ENCODE measurements at regions of chr2 and their contacts with region 1.

Region 1: DNA sequence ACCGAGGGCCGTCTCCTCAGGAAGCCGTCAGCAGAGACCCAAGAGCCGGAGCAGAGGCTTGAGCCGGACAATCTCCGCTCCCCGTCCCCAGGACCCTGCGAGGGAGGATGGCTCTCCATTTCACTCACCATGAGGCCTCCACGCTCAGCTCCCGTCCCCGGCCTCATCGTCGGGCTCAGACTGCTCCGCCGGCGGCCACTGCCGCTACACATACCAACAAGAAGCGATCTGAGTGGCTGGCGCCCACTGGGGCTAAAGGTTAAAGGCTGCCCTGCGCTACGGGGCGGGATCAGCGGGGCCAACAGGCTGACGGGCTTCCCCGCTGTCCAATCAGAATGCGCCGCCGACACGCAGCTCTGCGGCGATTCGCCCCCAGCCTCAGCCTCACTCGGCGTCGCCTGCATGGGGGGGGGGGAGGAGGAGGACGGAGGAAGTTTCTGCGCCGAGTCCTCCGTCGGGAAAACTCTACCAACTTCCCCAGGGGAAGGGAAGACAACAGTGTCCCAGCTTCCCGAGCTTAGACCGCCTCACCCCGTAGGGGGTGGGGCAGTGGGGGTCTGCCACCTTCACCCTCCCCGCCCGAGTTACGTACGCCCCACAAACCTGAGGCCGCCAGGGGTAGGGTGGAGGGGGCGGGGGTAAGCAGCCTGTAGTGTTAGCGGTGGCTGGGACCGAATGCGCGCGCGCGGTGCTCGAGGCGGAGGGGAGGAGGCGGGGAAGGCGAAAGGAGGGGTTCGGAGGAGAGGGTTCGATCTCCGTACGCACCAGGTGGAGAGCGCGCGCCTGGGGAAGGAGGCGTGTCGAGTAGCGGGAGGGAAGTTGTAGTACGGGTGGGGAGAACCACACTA is at the start of gene PRPF40A:
- DNase-seq: peak; percentile 99
- ATAC-seq: peak; percentile 78
- H3K4me3 Mint-ChIP-seq: peak within 1 kb of the TSS; percentile 100
- H3K27ac Mint-ChIP-seq: peak within 1 kb of the TSS; percentile 100
- H3K4me1 Mint-ChIP-seq: peaks cover 62% of the 10 kb centered on the region
- H3K27me3 Mint-ChIP-seq: no peaks in the 10 kb centered on the region
- total RNA-seq, gene PRPF40A: 126 to 127 TPM

Region 2: DNA sequence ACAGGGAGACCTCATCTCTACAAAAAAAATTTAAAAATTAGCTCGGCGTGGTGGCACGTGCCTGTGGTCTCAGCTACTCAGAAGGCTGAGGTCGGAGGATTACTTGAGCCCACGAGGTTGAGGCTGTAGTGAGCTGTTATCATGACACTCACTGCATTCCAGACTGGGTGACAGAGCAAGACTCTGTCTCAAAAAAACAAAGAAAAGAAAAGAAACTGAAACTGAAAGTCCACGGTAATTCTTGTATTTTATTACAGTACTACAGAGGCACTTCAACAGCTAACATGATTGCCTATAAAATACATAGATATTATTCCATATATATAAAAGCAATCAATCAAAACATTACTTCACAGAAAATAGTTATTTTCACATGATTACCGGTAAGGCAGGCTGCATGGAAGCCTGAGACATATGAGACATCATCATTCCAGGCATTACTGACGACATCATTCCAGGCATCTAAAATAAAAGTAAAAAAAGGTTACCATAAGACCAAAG is 23.2 kb before region 1 on chr2:
- CTCF ChIA-PET with region 1: interaction called, 11 read pairs
- DNase-seq: peak; percentile 79
- ATAC-seq: peak; percentile 86
- H3K4me3 Mint-ChIP-seq: peak overlapping the region; percentile 83
- H3K27ac Mint-ChIP-seq: peak overlapping the region; percentile 98
- H3K4me1 Mint-ChIP-seq: peaks cover 33% of the 10 kb centered on the region
- H3K27me3 Mint-ChIP-seq: no peaks in the 10 kb centered on the region

Region 3: DNA sequence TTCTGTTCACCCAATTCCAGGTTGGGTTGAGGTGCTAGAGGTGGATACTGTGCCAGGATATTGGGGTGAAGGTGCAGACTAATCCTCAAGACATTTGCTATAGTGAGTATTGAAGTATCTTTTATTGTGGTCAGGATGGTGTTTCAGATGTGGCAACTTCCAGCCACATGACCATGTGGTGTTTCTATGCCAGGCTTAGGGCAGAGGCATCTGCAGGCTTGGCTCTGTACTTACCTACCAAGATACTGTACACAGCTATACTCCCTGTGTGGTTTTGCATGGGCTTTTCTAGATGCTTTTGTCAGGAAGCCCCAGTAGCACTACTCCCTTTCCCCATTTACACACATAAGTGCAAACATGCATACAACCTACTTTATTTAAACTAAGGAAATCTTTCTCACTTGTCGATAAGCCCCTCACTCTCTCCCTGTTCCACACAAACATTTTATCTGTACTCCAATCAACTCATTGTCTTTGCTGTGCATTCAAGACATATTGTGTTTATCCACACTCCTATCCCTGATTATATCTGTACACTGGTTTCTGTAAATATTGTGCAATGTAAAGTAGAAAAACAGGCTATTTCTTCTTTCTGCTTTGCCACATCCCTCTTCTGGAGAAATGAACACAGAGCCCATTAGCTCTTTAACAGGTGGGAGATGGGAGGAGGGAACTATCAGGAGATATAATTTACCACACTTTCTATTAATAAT is 13.3 kb after region 1 on chr2:
- CTCF ChIA-PET with region 1: interaction called, 12 read pairs
- DNase-seq: peak; percentile 76
- ATAC-seq: peak; percentile 90
- H3K4me3 Mint-ChIP-seq: no peak overlapping the region
- H3K27ac Mint-ChIP-seq: peak overlapping the region; percentile 59
- H3K4me1 Mint-ChIP-seq: peaks cover 28% of the 10 kb centered on the region
- H3K27me3 Mint-ChIP-seq: no peaks in the 10 kb centered on the region

Region 4: GRCh38 chr2:152743002-152743401 is 25.6 kb after region 1 on chr2:
- CTCF ChIA-PET with region 1: interaction called, 11 read pairs
- DNase-seq: no peak
- ATAC-seq: no peak
- H3K4me3 Mint-ChIP-seq: no peak overlapping the region
- H3K27ac Mint-ChIP-seq: no peak overlapping the region
- H3K4me1 Mint-ChIP-seq: no peaks in the 10 kb centered on the region
- H3K27me3 Mint-ChIP-seq: no peaks in the 10 kb centered on the region

Region 5: DNA sequence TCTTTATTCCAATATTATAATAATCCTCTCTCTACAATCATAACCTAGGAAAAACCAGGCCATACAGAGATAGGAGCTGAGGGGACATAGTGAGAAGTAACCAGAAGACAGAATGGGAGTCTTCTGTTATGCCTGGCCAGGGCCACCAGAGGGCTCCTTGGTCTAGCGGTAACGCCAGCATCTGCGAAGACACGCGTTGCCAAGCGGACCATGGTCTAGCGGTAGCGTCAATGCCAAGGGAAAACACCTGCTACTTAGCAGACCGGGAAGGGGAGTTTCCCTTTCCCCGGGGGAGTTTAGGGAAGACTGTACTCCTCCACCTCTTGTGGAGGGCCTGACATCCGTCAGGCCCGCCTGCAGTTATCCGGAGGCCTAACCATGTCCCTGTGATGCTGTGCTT is 37.6 kb after region 1 on chr2:
- CTCF ChIA-PET with region 1: no interaction called
- DNase-seq: no peak
- ATAC-seq: no peak
- H3K4me3 Mint-ChIP-seq: no peak overlapping the region
- H3K27ac Mint-ChIP-seq: no peak overlapping the region
- H3K4me1 Mint-ChIP-seq: no peaks in the 10 kb centered on the region
- H3K27me3 Mint-ChIP-seq: no peaks in the 10 kb centered on the region